Breast epithelium (tissue), 4 donors: ENCODE measurements at regions of chr3 and their contacts with region 1.

Region 1: GRCh38 chr3:123700791-123701722 is 116.2 kb upstream of the HACD2 start:
- DNase-seq: peak in 1 of 2 donors; percentile 67
- H3K4me3 ChIP-seq: peak overlapping the region; percentile 32 to 62 (median 53)
- H3K27ac ChIP-seq: peak overlapping the region; percentile 64 to 88
- H3K4me1 ChIP-seq: no peaks in the 10 kb centered on the region
- H3K27me3 ChIP-seq: no peaks in the 10 kb centered on the region
- CTCF ChIP-seq: no peak
- POLR2A ChIP-seq: no peak

Region 2: GRCh38 chr3:123584988-123585937 is 115.8 kb before region 1 on chr3 and contains the start of gene HACD2:
- intact Hi-C with region 1: no loop called
- DNase-seq: peak; percentile 95
- H3K4me3 ChIP-seq: peak within 1 kb of the TSS; percentile 87 to 98 (median 94)
- H3K27ac ChIP-seq: peak within 1 kb of the TSS; percentile 93 to 94
- H3K4me1 ChIP-seq: peaks cover 0 to 4% of the 10 kb centered on the region in 2 donors
- H3K27me3 ChIP-seq: no peaks in the 10 kb centered on the region
- CTCF ChIP-seq: no peak
- POLR2A ChIP-seq: peak; percentile 23
- total RNA-seq, gene HACD2: 29.5 to 61.0 (median 55.9) TPM

Region 3: GRCh38 chr3:123642182-123642956 is 58.7 kb before region 1 on chr3:
- intact Hi-C with region 1: loop called (anchors 10 kb)
- DNase-seq: peak in 1 of 2 donors; percentile 70
- H3K4me3 ChIP-seq: no peak overlapping the region
- H3K27ac ChIP-seq: peak overlapping the region; percentile 4 to 14
- H3K4me1 ChIP-seq: no peaks in the 10 kb centered on the region
- H3K27me3 ChIP-seq: no peaks in the 10 kb centered on the region
- CTCF ChIP-seq: peak; percentile 11 to 67 (median 44)
- POLR2A ChIP-seq: no peak